ENCODE measurements at regions of chr1 and their contacts with region 1.

Region 1: GRCh38 chr1:116485071-116485735 is 85.6 kb downstream of the CD58 start:
- DNase-seq: no peak
- ATAC-seq: peak; percentile 99
- H3K4me3 ChIP-seq: no peak overlapping the region
- H3K27ac ChIP-seq: no peak overlapping the region
- H3K4me1 ChIP-seq: peaks cover 10% of the 10 kb centered on the region
- H3K27me3 ChIP-seq: no peaks in the 10 kb centered on the region
- CTCF ChIP-seq: peak; percentile 89 to 97 (median 90); a peak in 5 of 6 replicates
- EP300 ChIP-seq: no peak
- POLR2A ChIP-seq: no peak
- RAD21 ChIP-seq: peak; percentile 95

Region 2: GRCh38 chr1:116139592-116140134 is 345.5 kb before region 1 on chr1:
- CTCF ChIA-PET with region 1: interaction called, 239 read pairs
- POLR2A ChIA-PET with region 1: interaction called, 7 read pairs
- RAD21 ChIA-PET with region 1: interaction called, 147 read pairs
- SMC1A ChIA-PET with region 1: interaction called, 161 read pairs
- in situ Hi-C with region 1: loop called (anchors 5 kb)
- intact Hi-C with region 1: loop called (anchors 1 kb)
- DNase-seq: no peak
- ATAC-seq: no peak
- H3K4me3 ChIP-seq: no peak overlapping the region
- H3K27ac ChIP-seq: no peak overlapping the region
- H3K4me1 ChIP-seq: peaks cover 2% of the 10 kb centered on the region; the same call in 1 of the 2 replicates
- H3K27me3 ChIP-seq: no peaks in the 10 kb centered on the region
- CTCF ChIP-seq: no peak
- EP300 ChIP-seq: no peak
- POLR2A ChIP-seq: no peak
- RAD21 ChIP-seq: no peak

Region 3: DNA sequence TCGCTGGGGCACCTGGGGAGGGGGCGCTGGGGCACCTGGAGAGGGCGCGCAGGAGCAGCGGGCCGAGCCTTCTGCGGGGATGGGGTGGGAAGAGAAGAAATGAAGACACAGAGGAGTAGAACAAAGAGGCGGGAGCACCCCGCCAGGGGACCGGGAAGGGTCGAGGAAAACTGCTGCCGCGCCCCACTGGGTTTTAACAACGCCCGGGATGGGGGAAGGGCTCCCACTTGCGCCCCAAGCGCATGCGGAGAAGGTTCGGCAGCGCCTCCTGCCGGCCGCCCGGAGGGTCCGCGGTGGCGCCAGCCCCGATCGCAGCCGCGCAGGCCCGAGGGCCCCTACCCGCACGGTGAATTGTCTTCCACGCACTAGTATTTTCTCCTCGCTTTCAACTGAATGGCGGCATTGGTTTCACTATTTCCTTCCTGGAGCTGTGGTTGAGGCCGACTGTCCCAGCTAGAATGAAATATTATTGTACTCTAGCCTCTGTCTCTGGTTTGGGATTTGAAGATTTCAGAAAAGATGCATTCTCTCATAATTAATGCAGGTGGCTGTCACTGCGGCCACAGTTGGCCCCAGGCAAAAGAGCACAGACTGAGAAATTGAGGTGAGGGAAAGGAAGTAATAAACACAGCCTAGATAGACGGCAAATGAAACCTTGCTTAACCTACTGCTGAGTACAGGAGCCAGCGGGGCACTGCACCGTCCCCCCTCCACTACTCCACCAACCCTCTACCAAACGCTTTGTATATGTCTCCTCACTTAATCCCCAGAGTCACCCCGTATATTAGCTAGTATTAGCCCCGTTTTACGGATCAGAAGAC is 316.7 kb before region 1 on chr1:
- CTCF ChIA-PET with region 1: interaction called, 26 read pairs
- POLR2A ChIA-PET with region 1: no interaction called
- RAD21 ChIA-PET with region 1: interaction called, 3 read pairs
- SMC1A ChIA-PET with region 1: interaction called, 4 read pairs
- in situ Hi-C with region 1: no loop called
- intact Hi-C with region 1: no loop called
- DNase-seq: no peak
- ATAC-seq: peak; percentile 98
- H3K4me3 ChIP-seq: peak overlapping the region; percentile 66
- H3K27ac ChIP-seq: no peak overlapping the region
- H3K4me1 ChIP-seq: no peaks in the 10 kb centered on the region
- H3K27me3 ChIP-seq: no peaks in the 10 kb centered on the region; a peak in 2 of 4 replicates
- CTCF ChIP-seq: peak; percentile 75 to 87 (median 84)
- EP300 ChIP-seq: no peak
- POLR2A ChIP-seq: no peak
- RAD21 ChIP-seq: peak; percentile 37; the same call in 1 of the 2 replicates

Region 4: GRCh38 chr1:116345843-116346242 is 139.4 kb before region 1 on chr1:
- CTCF ChIA-PET with region 1: interaction called, 13 read pairs
- POLR2A ChIA-PET with region 1: no interaction called
- RAD21 ChIA-PET with region 1: interaction called, 3 read pairs
- SMC1A ChIA-PET with region 1: interaction called, 4 read pairs
- in situ Hi-C with region 1: no loop called
- intact Hi-C with region 1: no loop called
- DNase-seq: no peak
- ATAC-seq: no peak
- H3K4me3 ChIP-seq: no peak overlapping the region
- H3K27ac ChIP-seq: no peak overlapping the region
- H3K4me1 ChIP-seq: no peaks in the 10 kb centered on the region
- H3K27me3 ChIP-seq: no peaks in the 10 kb centered on the region
- CTCF ChIP-seq: no peak
- EP300 ChIP-seq: no peak
- POLR2A ChIP-seq: no peak
- RAD21 ChIP-seq: no peak

Region 5: GRCh38 chr1:116418091-116418830 is 66.9 kb before region 1 on chr1:
- CTCF ChIA-PET with region 1: interaction called, 17 read pairs
- POLR2A ChIA-PET with region 1: interaction called, 7 read pairs
- RAD21 ChIA-PET with region 1: interaction called, 5 read pairs
- SMC1A ChIA-PET with region 1: interaction called, 9 read pairs
- in situ Hi-C with region 1: no loop called
- intact Hi-C with region 1: no loop called
- DNase-seq: peak; percentile 51
- ATAC-seq: peak; percentile 96
- H3K4me3 ChIP-seq: peak overlapping the region; percentile 96
- H3K27ac ChIP-seq: peak overlapping the region; percentile 89
- H3K4me1 ChIP-seq: peaks cover 11% of the 10 kb centered on the region
- H3K27me3 ChIP-seq: no peaks in the 10 kb centered on the region
- CTCF ChIP-seq: no peak
- EP300 ChIP-seq: no peak
- POLR2A ChIP-seq: peak; percentile 100
- RAD21 ChIP-seq: no peak

Region 6: GRCh38 chr1:116498789-116499628 is 13.8 kb after region 1 on chr1:
- CTCF ChIA-PET with region 1: interaction called, 230 read pairs
- POLR2A ChIA-PET with region 1: interaction called, 6 read pairs
- RAD21 ChIA-PET with region 1: interaction called, 76 read pairs
- SMC1A ChIA-PET with region 1: interaction called, 81 read pairs
- in situ Hi-C with region 1: no loop called
- intact Hi-C with region 1: no loop called
- DNase-seq: no peak
- ATAC-seq: peak; percentile 85
- H3K4me3 ChIP-seq: no peak overlapping the region
- H3K27ac ChIP-seq: no peak overlapping the region
- H3K4me1 ChIP-seq: peaks cover 11% of the 10 kb centered on the region
- H3K27me3 ChIP-seq: no peaks in the 10 kb centered on the region
- CTCF ChIP-seq: peak; percentile 79 to 86 (median 79); a peak in 5 of 6 replicates
- EP300 ChIP-seq: no peak
- POLR2A ChIP-seq: no peak
- RAD21 ChIP-seq: peak; percentile 92

Region 7: DNA sequence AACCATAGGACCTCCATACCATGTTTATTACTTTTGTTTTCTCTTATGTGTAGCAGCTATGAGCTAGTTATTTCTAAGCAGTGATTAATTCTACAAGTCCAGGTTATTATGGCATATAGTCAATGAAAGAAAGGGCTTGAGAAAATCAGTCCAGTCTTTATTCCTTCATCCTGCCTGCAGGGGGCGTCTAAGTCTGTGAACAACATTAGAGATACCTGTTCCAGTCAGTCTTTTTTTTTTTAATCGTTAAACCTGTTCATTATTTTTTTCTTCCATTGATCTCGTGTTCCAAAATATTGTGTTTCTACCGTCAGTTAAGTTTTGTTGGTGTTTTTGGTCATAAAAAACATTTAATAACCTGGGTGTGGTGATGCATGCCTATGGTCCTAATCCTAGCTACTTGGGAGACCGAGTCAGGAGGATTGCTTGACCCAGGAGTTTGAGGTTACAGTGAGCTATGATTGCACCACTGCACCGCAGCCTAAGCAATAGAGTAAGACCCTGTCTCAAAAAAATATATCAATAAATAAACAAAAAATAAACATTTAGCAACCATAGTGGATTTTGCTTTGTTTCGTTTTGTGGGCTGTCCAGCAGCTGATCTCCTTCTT is 239.7 kb after region 1 on chr1:
- CTCF ChIA-PET with region 1: no interaction called
- POLR2A ChIA-PET with region 1: no interaction called
- RAD21 ChIA-PET with region 1: no interaction called
- SMC1A ChIA-PET with region 1: no interaction called
- in situ Hi-C with region 1: no loop called
- intact Hi-C with region 1: no loop called
- DNase-seq: no peak
- ATAC-seq: peak; percentile 88
- H3K4me3 ChIP-seq: no peak overlapping the region
- H3K27ac ChIP-seq: no peak overlapping the region
- H3K4me1 ChIP-seq: no peaks in the 10 kb centered on the region
- H3K27me3 ChIP-seq: no peaks in the 10 kb centered on the region
- CTCF ChIP-seq: peak; percentile 70 to 78 (median 72)
- EP300 ChIP-seq: no peak
- POLR2A ChIP-seq: no peak
- RAD21 ChIP-seq: peak; percentile 80

Region 8: GRCh38 chr1:116881879-116882520 is 396.8 kb after region 1 on chr1:
- CTCF ChIA-PET with region 1: no interaction called
- POLR2A ChIA-PET with region 1: no interaction called
- RAD21 ChIA-PET with region 1: no interaction called
- SMC1A ChIA-PET with region 1: no interaction called
- in situ Hi-C with region 1: no loop called
- intact Hi-C with region 1: no loop called
- DNase-seq: no peak
- ATAC-seq: peak; percentile 69
- H3K4me3 ChIP-seq: no peak overlapping the region
- H3K27ac ChIP-seq: no peak overlapping the region
- H3K4me1 ChIP-seq: peaks cover 14% of the 10 kb centered on the region; the same call in 1 of the 2 replicates
- H3K27me3 ChIP-seq: no peaks in the 10 kb centered on the region
- CTCF ChIP-seq: peak; percentile 45 to 73 (median 65)
- EP300 ChIP-seq: no peak
- POLR2A ChIP-seq: no peak
- RAD21 ChIP-seq: peak; percentile 79